K562 (cell line): ENCODE measurements at regions of chr1 and their contacts with region 1.

Region 1: GRCh38 chr1:61732726-61733125 is 7.8 kb upstream of the TM2D1 start:
- DNase-seq: no peak
- ATAC-seq: no peak
- H3K4me3 ChIP-seq: no peak overlapping the region
- H3K27ac ChIP-seq: no peak overlapping the region
- H3K4me1 ChIP-seq: no peaks in the 10 kb centered on the region; a peak in 1 of 5 replicates
- H3K27me3 ChIP-seq: no peaks in the 10 kb centered on the region
- CTCF ChIP-seq: no peak
- EP300 ChIP-seq: no peak
- POLR2A ChIP-seq: no peak
- RAD21 ChIP-seq: no peak

Region 2: DNA sequence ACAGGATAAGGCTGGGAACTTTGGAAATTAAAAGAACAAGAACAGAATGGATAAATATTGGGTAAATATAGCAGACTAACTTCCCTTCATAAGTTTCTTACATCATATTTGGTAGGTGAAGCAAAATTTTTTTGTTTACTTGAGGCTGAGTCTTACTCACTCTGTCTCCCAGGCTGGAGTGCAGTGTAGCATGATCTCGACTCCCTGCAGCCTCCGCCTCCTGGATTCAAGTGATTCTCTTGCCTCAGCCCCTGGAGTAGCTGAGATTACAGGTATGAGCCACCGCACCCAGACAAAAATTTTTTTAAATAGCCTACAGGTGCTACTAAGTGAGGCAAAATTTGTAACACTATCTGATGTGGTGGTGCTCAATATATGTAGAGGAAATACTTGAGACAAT is 58.5 kb before region 1 on chr1:
- CTCF ChIA-PET with region 1: no interaction called
- POLR2A ChIA-PET with region 1: no interaction called
- in situ Hi-C with region 1: no loop called
- intact Hi-C with region 1: loop called (anchors 10 kb)
- DNase-seq: no peak
- ATAC-seq: no peak
- H3K4me3 ChIP-seq: no peak overlapping the region
- H3K27ac ChIP-seq: no peak overlapping the region
- H3K4me1 ChIP-seq: no peaks in the 10 kb centered on the region
- H3K27me3 ChIP-seq: 0 out of 5 replicates have a peak, but pooled peaks cover 0 to 3% of the 10 kb centered on the region in 2 experiments
- CTCF ChIP-seq: no peak
- EP300 ChIP-seq: no peak
- POLR2A ChIP-seq: no peak
- RAD21 ChIP-seq: no peak